Heart right ventricle (tissue), 16 donors: ENCODE measurements at regions of chr21 and their contacts with region 1.

Region 1: GRCh38 chr21:33976082-33977016 is 60.7 kb upstream of the ATP5PO start:
- DNase-seq: peak; percentile 34 to 35
- ATAC-seq: peak; percentile 69 to 92 (median 78)
- H3K4me3 ChIP-seq: peak overlapping the region in 4 of 10 donors; percentile 10 to 22 (median 20)
- H3K27ac ChIP-seq: peak overlapping the region; percentile 28 to 91 (median 76)
- H3K4me1 ChIP-seq: peaks cover 0 to 40% (median 10%) of the 10 kb centered on the region in 9 donors
- H3K27me3 ChIP-seq: no peaks in the 10 kb centered on the region
- CTCF ChIP-seq: no peak

Region 2: DNA sequence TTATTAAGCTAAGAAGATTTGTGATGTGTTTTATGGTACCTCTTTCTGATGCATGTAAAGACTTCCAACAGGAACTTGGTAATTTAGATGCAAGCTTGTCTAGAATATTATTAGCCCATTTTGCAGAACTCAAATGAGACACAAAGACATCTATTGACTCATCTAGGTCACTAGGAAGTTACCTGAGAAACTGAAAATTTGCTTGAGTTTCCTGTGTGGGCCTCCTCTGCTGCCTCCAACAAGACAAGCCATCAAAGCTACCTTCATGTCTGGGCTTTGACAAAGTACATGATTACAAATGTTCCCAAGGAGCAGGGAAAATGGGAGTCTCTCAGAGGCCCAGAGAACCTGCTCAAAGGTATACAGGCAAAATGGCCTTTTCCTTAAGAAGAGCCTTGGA is 1067.2 kb after region 1 on chr21:
- intact Hi-C with region 1: loop called in 1 of 10 experiments (anchors 5 kb)
- DNase-seq: no peak
- ATAC-seq: no peak
- H3K4me3 ChIP-seq: no peak overlapping the region
- H3K27ac ChIP-seq: peak overlapping the region in 1 of 10 donors; percentile 86
- H3K4me1 ChIP-seq: peaks cover 0 to 88% (median 0%) of the 10 kb centered on the region in 9 donors
- H3K27me3 ChIP-seq: peaks cover 0 to 34% (median 13%) of the 10 kb centered on the region in 7 donors
- CTCF ChIP-seq: no peak